Natural killer cell (primary cell): ENCODE measurements at regions of chr2 and their contacts with region 1.

Region 1: GRCh38 chr2:211248847-211249246 is 692.4 kb downstream of the CPS1 start:
- DNase-seq: no peak
- ATAC-seq: no peak
- H3K4me3 ChIP-seq: no peak overlapping the region
- H3K4me3 Mint-ChIP-seq: no peak overlapping the region
- H3K27ac ChIP-seq: no peak overlapping the region
- H3K27ac Mint-ChIP-seq: no peak overlapping the region
- H3K4me1 ChIP-seq: no peaks in the 10 kb centered on the region
- H3K4me1 Mint-ChIP-seq: no peaks in the 10 kb centered on the region
- H3K27me3 ChIP-seq: no peaks in the 10 kb centered on the region
- H3K27me3 Mint-ChIP-seq: no peaks in the 10 kb centered on the region
- CTCF ChIP-seq: no peak

Region 2: GRCh38 chr2:211077211-211077767 is 171.6 kb before region 1 on chr2:
- intact Hi-C with region 1: no loop called
- DNase-seq: no peak
- ATAC-seq: no peak
- H3K4me3 ChIP-seq: no peak overlapping the region
- H3K4me3 Mint-ChIP-seq: no peak overlapping the region
- H3K27ac ChIP-seq: no peak overlapping the region
- H3K27ac Mint-ChIP-seq: no peak overlapping the region
- H3K4me1 ChIP-seq: no peaks in the 10 kb centered on the region
- H3K4me1 Mint-ChIP-seq: no peaks in the 10 kb centered on the region
- H3K27me3 ChIP-seq: no peaks in the 10 kb centered on the region
- H3K27me3 Mint-ChIP-seq: no peaks in the 10 kb centered on the region
- CTCF ChIP-seq: no peak

Region 3: DNA sequence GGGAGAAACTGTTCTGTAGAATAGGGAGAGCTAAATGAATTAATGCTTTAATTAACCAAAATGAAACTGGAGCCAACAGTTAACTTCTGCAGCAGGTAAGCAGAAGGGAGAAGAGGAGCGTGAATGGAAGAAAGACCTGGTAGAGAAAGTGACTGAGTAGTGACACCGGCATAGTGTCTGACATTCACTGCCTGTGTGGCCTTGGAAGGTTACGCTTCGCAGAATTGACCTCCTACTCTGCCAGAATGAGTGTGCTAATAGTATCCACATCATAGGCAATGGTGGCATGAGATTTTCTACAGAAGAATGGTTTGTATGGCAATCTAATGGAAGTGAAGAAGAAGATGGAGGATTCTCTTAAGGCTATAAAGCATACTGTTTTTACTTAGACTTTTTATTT is 78.0 kb before region 1 on chr2:
- intact Hi-C with region 1: no loop called
- DNase-seq: no peak
- ATAC-seq: no peak
- H3K4me3 ChIP-seq: no peak overlapping the region
- H3K4me3 Mint-ChIP-seq: no peak overlapping the region
- H3K27ac ChIP-seq: no peak overlapping the region
- H3K27ac Mint-ChIP-seq: no peak overlapping the region
- H3K4me1 ChIP-seq: no peaks in the 10 kb centered on the region
- H3K4me1 Mint-ChIP-seq: no peaks in the 10 kb centered on the region
- H3K27me3 ChIP-seq: no peaks in the 10 kb centered on the region
- H3K27me3 Mint-ChIP-seq: no peaks in the 10 kb centered on the region
- CTCF ChIP-seq: no peak

Region 4: DNA sequence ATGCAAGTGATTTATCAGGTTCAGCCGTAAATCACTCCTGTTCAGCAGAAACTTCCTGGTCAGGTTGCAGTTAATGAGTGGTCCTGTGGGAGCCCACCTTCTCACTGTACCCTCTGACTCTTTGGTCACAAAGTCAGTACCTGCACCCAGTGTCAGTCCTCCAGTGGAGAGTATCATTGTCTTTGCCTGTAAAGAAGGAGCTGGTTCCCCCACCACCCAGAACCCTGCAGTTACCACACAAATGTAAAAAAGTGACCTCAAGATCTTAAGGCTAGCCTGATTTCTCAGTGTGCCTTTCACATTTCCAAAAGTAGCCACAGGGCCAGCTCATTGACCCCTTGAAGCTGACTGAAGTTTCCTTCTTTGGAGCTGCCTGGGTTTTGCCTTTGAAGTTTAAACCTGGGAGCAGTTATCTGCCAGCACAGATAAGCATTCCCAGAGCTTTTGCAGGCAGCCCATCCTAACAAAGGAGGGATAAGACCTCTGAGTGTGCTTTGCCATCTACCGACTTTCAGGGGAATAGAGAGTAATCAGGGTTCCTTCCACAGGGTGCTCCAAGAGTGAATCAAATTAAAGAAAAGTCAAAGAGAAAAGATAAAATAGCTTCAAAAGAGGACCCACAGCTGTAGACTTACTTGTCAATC is 32.7 kb after region 1 on chr2:
- intact Hi-C with region 1: loop called (anchors 2 kb)
- DNase-seq: no peak
- ATAC-seq: no peak
- H3K4me3 ChIP-seq: no peak overlapping the region
- H3K4me3 Mint-ChIP-seq: no peak overlapping the region
- H3K27ac ChIP-seq: no peak overlapping the region
- H3K27ac Mint-ChIP-seq: no peak overlapping the region
- H3K4me1 ChIP-seq: no peaks in the 10 kb centered on the region
- H3K4me1 Mint-ChIP-seq: no peaks in the 10 kb centered on the region
- H3K27me3 ChIP-seq: no peaks in the 10 kb centered on the region
- H3K27me3 Mint-ChIP-seq: no peaks in the 10 kb centered on the region
- CTCF ChIP-seq: no peak

Region 5: DNA sequence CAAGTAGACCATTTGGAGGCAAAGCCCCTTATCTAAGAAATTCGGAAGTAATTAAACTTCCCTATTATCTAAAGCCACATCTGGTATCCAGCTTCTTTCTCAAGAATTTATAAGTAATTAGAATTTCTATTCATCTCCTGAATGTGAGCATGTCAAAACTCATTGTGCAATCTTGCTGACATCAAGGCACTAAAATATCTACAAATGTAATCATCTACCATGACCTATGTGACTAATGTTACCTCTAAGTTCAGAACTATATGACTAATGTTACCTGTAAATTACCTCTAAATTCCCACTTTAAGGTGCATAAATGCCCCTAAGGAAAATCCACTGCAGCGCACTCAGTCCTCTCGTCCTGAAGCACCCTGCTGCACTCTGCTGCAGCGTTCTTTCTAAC is 80.6 kb after region 1 on chr2:
- intact Hi-C with region 1: no loop called
- DNase-seq: no peak
- ATAC-seq: no peak
- H3K4me3 ChIP-seq: no peak overlapping the region
- H3K4me3 Mint-ChIP-seq: no peak overlapping the region
- H3K27ac ChIP-seq: no peak overlapping the region
- H3K27ac Mint-ChIP-seq: no peak overlapping the region
- H3K4me1 ChIP-seq: no peaks in the 10 kb centered on the region
- H3K4me1 Mint-ChIP-seq: no peaks in the 10 kb centered on the region
- H3K27me3 ChIP-seq: no peaks in the 10 kb centered on the region
- H3K27me3 Mint-ChIP-seq: no peaks in the 10 kb centered on the region
- CTCF ChIP-seq: no peak

Region 6: DNA sequence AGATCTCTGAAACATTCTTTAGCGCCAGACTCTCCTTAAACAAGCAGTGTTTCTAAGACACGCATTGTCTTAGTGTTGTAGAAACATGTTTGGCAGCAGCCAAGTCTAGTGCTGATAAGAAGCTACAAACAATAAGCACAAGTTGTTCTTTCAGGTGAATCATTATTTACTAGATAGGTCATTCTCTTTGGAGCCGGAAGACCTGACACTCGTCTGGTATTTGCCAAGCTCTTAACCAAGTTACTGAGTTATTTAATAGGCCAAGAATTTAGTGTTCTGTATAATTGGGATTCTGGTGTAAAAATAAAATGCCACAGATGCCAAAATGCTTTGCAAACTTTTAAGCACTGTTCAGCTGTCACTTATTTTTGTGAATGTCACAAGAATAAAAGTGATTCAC is 159.7 kb after region 1 on chr2:
- intact Hi-C with region 1: no loop called
- DNase-seq: no peak
- ATAC-seq: no peak
- H3K4me3 ChIP-seq: no peak overlapping the region
- H3K4me3 Mint-ChIP-seq: no peak overlapping the region
- H3K27ac ChIP-seq: no peak overlapping the region
- H3K27ac Mint-ChIP-seq: no peak overlapping the region
- H3K4me1 ChIP-seq: no peaks in the 10 kb centered on the region
- H3K4me1 Mint-ChIP-seq: no peaks in the 10 kb centered on the region
- H3K27me3 ChIP-seq: no peaks in the 10 kb centered on the region
- H3K27me3 Mint-ChIP-seq: no peaks in the 10 kb centered on the region
- CTCF ChIP-seq: no peak